ENCODE measurements at regions of chr16 and their contacts with region 1.

Region 1: GRCh38 chr16:68229431-68230198 is 6.3 kb downstream of the ESRP2 start:
- DNase-seq: no peak

Region 2: DNA sequence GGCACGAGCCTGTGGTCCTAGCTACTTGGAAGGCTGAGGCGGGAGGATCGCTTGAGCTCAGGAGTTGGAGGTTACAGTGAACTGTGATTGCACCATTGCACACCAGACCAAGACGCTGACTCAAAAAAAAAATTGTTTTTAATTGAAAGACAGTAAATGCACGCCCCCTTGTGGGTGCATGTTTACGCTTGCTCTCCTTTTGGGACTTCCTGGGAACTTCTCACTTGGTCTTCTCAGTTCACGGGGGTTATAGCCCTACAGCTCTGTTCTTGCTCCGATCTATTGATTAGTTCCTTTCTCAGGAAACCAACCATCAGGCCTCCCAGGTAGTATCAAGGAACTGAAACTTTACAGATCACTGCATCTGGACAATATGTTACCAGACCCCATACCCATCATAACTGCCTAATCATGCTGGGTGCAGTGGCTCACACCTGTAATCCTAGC is 715.2 kb before region 1 on chr16:
- intact Hi-C with region 1: no loop called
- DNase-seq: peak; percentile 82

Region 3: DNA sequence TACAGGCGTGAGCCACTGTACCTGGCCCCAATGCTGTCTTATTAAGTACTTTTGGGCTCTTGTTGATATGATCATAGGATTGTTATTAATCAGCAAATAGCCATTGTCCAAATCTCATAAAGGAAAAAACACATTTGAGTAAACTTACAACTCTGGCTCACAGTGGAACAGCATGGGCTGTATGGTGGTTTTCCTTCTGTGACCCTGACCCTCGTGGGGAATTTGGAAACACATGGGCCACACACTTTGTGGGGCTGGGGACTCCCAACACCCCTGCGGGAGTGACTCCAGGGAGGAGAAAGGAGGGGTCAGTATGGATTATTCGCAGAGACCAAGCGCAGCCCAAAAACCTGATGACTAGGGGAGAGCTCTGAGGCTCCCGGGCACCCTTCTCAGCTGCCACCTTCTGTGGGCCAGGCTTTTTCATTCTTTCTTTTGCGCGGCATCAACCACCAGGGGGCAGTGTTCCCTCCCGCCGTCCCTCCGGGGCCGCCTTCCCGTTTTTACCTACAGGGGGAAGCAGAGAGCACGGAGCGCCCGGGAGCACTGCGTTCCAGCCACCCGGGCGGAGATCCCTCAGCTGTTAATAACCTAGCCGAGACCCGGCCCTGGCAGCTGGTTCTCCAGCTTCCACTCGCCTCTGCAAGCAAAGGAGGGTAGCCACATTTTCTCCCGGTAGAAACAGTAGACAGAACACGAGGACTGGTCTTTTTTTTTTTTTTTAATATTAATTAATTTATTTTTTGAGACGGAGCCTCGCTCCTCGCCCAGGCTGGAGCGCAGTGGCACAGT is 413.2 kb before region 1 on chr16:
- intact Hi-C with region 1: loop called (anchors 2 kb)
- DNase-seq: peak; percentile 96

Region 4: GRCh38 chr16:67993189-67994039 is 236.2 kb before region 1 on chr16:
- intact Hi-C with region 1: loop called (anchors 5 kb)
- DNase-seq: peak; percentile 90

Region 5: GRCh38 chr16:68093816-68094613 is 135.6 kb before region 1 on chr16:
- intact Hi-C with region 1: loop called (anchors 2 kb)
- DNase-seq: no peak

Region 6: GRCh38 chr16:68247400-68247799 is 17.8 kb after region 1 on chr16:
- intact Hi-C with region 1: no loop called
- DNase-seq: no peak

Region 7: DNA sequence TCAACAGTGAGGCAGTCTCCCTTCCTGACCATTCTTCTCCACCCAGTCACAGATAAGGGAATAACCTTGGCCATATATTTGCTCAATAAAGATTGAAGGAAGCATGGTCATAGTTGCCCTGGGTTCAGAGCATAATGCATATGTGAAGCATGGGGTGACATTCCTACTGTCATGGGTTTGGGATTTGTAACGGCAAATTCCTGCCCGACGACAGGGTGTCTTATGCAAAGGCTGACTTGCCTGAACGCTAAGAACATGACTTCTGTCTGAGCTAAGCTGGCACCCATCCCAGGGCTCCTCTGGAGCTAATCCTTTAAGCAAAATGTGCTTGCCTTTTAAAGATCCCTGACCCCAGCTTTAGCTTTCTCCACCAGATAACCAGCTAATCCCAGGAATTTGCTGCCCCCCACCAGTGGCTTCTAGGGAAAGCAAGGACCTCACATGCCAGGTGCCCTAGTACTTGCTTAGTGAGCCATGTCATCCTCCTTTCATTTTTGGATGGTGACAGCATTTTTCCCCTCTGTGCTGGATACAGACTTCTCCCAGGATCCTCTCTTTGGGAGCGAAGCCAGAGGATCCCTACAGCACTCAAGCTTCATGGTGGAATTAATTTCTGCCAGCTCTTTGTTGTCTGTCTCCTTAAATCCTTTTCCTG is 69.4 kb after region 1 on chr16:
- intact Hi-C with region 1: no loop called
- DNase-seq: peak; percentile 74

Measured in cardiac septum (tissue), 1 donor.